ENCODE measurements at regions of chr1 and their contacts with region 1.

Region 1: DNA sequence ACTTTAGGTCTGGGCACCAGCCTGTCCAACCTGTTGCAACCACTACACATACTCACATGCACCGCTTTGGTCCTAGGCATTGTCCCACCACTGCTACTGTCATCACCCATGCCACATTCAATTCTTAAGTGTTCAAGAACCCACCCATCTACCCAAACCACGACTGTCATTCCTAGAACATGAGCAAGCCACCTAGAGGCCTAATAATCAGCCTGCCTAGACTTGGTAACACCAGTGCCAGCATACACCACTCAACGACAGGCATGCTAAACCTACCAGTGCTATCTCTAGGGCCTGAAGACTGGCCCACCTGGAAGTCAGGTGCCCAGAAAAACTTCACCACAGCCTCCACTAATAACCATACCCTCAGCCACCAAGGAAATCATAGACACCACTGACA is 532.8 kb upstream of the DEPDC1 start:
- DNase-seq: no peak
- ATAC-seq: no peak
- H3K4me3 ChIP-seq: no peak overlapping the region
- H3K27ac ChIP-seq: no peak overlapping the region
- H3K4me1 ChIP-seq: no peaks in the 10 kb centered on the region
- H3K27me3 ChIP-seq: no peaks in the 10 kb centered on the region
- CTCF ChIP-seq: no peak
- EP300 ChIP-seq: no peak
- POLR2A ChIP-seq: no peak
- RAD21 ChIP-seq: no peak

Region 2: DNA sequence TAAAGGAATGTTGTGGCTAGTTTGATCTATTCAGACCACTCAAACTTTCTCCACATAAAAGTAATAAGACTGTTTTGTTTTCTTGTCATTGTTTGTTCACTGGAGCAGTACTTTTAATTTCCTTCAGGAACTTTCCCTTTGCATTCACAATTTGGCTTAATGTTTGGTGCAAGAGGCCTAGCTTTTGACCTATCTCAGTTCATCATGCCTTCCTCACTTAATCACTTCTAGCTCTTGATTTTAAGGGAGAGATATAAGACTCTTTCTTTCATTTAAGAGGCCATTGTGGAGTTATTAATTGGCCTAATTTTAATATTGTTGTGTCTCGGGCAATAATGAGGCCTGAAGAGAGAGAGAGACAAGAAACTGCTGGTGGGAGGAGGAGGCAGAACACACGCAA is 161.0 kb before region 1 on chr1:
- CTCF ChIA-PET with region 1: no interaction called
- POLR2A ChIA-PET with region 1: no interaction called
- in situ Hi-C with region 1: no loop called
- intact Hi-C with region 1: loop called (anchors 5 kb)
- DNase-seq: no peak
- ATAC-seq: no peak
- H3K4me3 ChIP-seq: no peak overlapping the region
- H3K27ac ChIP-seq: no peak overlapping the region
- H3K4me1 ChIP-seq: no peaks in the 10 kb centered on the region
- H3K27me3 ChIP-seq: no peaks in the 10 kb centered on the region
- CTCF ChIP-seq: no peak
- EP300 ChIP-seq: no peak
- POLR2A ChIP-seq: no peak
- RAD21 ChIP-seq: no peak